Endothelial cell of umbilical vein (primary cell): ENCODE measurements at regions of chr17 and their contacts with region 1.

Region 1: GRCh38 chr17:42428141-42428944 is 5.3 kb upstream of the CAVIN1 start:
- DNase-seq: peak; percentile 85
- H3K4me3 ChIP-seq: no peak overlapping the region
- H3K27ac ChIP-seq: no peak overlapping the region
- H3K4me1 ChIP-seq: peaks cover 5% of the 10 kb centered on the region
- H3K27me3 ChIP-seq: no peaks in the 10 kb centered on the region
- CTCF ChIP-seq: peak; percentile 71 to 76
- POLR2A ChIP-seq: no peak

Region 2: GRCh38 chr17:42361781-42362186 is 66.6 kb before region 1 on chr17:
- CTCF ChIA-PET with region 1: no interaction called
- POLR2A ChIA-PET with region 1: no interaction called
- dilution Hi-C with region 1: no loop called
- intact Hi-C with region 1: no loop called
- DNase-seq: no peak
- H3K4me3 ChIP-seq: no peak overlapping the region
- H3K27ac ChIP-seq: no peak overlapping the region
- H3K4me1 ChIP-seq: no peaks in the 10 kb centered on the region
- H3K27me3 ChIP-seq: no peaks in the 10 kb centered on the region
- CTCF ChIP-seq: no peak
- POLR2A ChIP-seq: no peak

Region 3: GRCh38 chr17:42459256-42459800 is 31.0 kb after region 1 on chr17:
- CTCF ChIA-PET with region 1: interaction called, 13 read pairs
- POLR2A ChIA-PET with region 1: interaction called, 7 read pairs
- dilution Hi-C with region 1: no loop called
- intact Hi-C with region 1: no loop called
- DNase-seq: no peak
- H3K4me3 ChIP-seq: peak overlapping the region; percentile 67 to 80 (median 78)
- H3K27ac ChIP-seq: peak overlapping the region; percentile 51
- H3K4me1 ChIP-seq: peaks cover 37% of the 10 kb centered on the region
- H3K27me3 ChIP-seq: no peaks in the 10 kb centered on the region
- CTCF ChIP-seq: peak; percentile 12 to 28
- POLR2A ChIP-seq: no peak

Region 4: DNA sequence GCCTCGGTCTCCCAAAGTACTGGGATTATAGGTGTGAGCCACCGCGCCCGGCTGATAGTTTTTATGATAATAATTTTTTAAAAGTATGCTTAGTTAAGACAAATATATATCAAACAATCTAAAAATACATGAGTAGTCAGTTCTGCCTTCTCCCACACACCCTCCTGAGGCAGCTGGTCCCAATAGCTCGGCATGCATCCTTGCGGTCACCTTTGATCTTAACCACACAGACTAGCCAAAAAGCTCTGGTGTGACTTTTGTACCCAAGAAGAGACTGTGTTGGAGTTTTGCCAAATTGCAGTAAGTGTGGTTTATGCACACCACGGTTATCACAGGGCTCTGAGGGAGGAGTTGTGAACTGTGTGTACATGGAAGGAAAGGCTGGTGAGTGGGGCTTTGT is 56.0 kb after region 1 on chr17:
- CTCF ChIA-PET with region 1: interaction called, 21 read pairs
- POLR2A ChIA-PET with region 1: no interaction called
- dilution Hi-C with region 1: no loop called
- intact Hi-C with region 1: no loop called
- DNase-seq: peak; percentile 41
- H3K4me3 ChIP-seq: no peak overlapping the region
- H3K27ac ChIP-seq: no peak overlapping the region
- H3K4me1 ChIP-seq: peaks cover 7% of the 10 kb centered on the region
- H3K27me3 ChIP-seq: no peaks in the 10 kb centered on the region
- CTCF ChIP-seq: no peak
- POLR2A ChIP-seq: no peak